ENCODE measurements at regions of chr6 and their contacts with region 1.

Region 1: DNA sequence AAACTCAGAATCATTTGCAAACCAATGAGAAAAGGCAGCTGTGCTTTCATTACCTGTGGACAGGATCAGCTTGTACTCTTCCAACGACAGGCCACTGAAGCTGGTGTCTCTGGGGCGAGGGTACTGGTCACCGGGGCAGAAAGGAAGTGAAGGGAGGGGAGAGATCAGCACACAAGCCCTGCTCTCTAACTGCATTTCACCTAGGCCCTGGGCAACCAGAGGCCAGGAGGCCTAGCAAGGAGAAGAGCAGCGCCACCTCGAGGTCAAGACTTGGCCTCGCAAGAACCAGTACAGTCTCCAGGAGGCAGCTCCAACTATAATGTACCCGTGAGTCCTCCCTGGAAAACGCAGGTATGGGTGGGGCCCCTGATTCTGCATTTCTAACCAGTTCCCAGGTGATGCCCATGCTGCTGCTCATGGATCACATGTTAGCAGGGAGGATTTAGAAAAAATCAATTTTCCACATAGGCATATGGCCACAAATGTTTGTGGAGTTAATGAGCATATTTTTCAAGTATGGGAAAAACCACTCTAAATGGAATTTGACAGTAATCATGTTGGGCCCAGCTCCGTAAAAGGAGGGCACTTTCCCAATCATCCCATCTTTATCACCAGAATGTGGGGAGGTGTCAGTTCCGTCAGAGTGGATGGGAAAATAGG is 11.0 kb downstream of the UQCC2 start:
- DNase-seq: peak; percentile 81 to 88 (median 86)
- H3K4me3 ChIP-seq: no peak overlapping the region
- H3K27ac ChIP-seq: peak overlapping the region in 1 of 2 experiments; percentile 0
- H3K4me1 ChIP-seq: peaks cover 0 to 50% (median 41%) of the 10 kb centered on the region in 4 experiments
- H3K27me3 ChIP-seq: no peaks in the 10 kb centered on the region

Region 2: DNA sequence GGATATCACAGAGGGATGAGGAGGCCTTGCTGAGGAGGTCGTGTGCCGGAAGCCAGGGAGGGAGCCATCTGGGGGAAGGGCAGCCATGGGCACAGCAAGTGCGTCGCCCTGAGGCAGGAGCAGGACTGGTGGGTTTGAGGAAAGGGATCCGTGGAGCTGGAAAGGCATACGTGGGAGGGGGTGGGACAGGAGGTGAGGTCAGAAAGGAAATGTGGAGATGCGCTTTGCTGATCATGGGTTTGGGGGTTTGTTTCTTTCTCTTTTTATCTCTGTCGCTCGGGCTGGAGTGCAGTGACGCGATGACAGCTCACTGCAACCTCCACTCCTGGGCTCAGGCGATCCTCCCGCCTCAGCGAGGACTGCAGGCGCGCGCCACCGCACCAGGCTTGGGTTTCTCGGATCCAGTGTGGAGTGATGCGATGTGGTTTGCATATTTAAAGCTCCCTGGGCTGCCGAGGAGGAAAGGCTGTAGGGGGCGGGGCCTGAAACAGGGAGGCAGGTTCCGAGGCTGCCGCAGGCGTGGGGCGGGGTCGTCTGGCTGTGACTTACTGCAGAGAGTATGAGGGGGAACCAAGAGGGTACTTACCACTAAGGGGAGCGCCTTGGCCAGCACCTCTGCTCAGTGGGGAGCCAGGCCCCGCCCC is 108.0 kb before region 1 on chr6:
- CTCF ChIA-PET with region 1: interaction called, 244 read pairs
- POLR2A ChIA-PET with region 1: interaction called, 4 read pairs
- DNase-seq: peak in 2 of 3 donors; percentile 67 to 69
- H3K4me3 ChIP-seq: peak overlapping the region in 4 of 7 experiments; percentile 47 to 71 (median 64)
- H3K27ac ChIP-seq: no peak overlapping the region
- H3K4me1 ChIP-seq: peaks cover 0 to 22% (median 13%) of the 10 kb centered on the region in 4 experiments
- H3K27me3 ChIP-seq: peaks cover 0 to 4% (median 0%) of the 10 kb centered on the region in 5 experiments

Region 3: GRCh38 chr6:33620856-33621710 is 79.4 kb before region 1 on chr6 and contains the start of gene ITPR3:
- CTCF ChIA-PET with region 1: interaction called, 12 read pairs
- POLR2A ChIA-PET with region 1: no interaction called
- DNase-seq: peak; percentile 34 to 66 (median 52)
- H3K4me3 ChIP-seq: peak within 1 kb of the TSS; percentile 65 to 96 (median 69)
- H3K27ac ChIP-seq: peak within 1 kb of the TSS in 1 of 2 experiments; percentile 46
- H3K4me1 ChIP-seq: peaks cover 2 to 26% (median 21%) of the 10 kb centered on the region in 4 experiments
- H3K27me3 ChIP-seq: peaks cover 0 to 16% (median 2%) of the 10 kb centered on the region in 5 experiments

Region 4: DNA sequence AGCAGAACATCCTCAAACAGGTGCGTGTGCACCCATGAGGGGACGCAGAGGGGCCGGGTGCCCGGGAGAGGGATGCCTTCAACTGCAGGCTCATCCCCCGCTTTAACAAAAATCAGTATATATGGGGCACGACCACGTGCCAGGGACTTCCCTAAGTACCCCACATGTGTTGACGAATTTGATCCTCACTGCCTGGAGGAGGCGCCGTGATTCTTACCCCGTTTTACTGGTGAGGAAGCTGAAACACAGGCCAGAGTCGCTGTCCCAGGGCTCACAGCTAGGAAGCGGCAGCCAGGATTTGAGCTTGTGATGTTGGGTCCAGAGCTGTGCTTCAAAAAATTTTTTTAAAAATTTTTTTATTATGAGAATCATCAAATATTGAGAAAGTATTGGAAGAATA is 34.6 kb before region 1 on chr6:
- CTCF ChIA-PET with region 1: interaction called, 17 read pairs
- POLR2A ChIA-PET with region 1: no interaction called
- DNase-seq: peak; percentile 10 to 37 (median 31)
- H3K4me3 ChIP-seq: no peak overlapping the region
- H3K27ac ChIP-seq: no peak overlapping the region
- H3K4me1 ChIP-seq: no peaks in the 10 kb centered on the region
- H3K27me3 ChIP-seq: no peaks in the 10 kb centered on the region

Region 5: GRCh38 chr6:33711140-33712129 is 10.9 kb after region 1 on chr6 and contains the start of gene UQCC2:
- CTCF ChIA-PET with region 1: interaction called, 28 read pairs
- POLR2A ChIA-PET with region 1: no interaction called
- DNase-seq: peak; percentile 96 to 98 (median 96)
- H3K4me3 ChIP-seq: peak within 1 kb of the TSS; percentile 60 to 97 (median 83)
- H3K27ac ChIP-seq: peak within 1 kb of the TSS; percentile 89 to 93
- H3K4me1 ChIP-seq: peaks cover 9 to 44% (median 30%) of the 10 kb centered on the region in 4 experiments
- H3K27me3 ChIP-seq: no peaks in the 10 kb centered on the region

Measured in common myeloid progenitor, CD34-positive (primary cell).